ENCODE measurements at regions of chr11 and their contacts with region 1.

Region 1: GRCh38 chr11:131064373-131064991 is 148.2 kb upstream of the SNX19 start:
- DNase-seq: peak; percentile 76
- H3K4me3 ChIP-seq: no peak overlapping the region
- H3K27ac ChIP-seq: no peak overlapping the region
- H3K4me1 ChIP-seq: no peaks in the 10 kb centered on the region
- H3K27me3 ChIP-seq: peaks cover 80% of the 10 kb centered on the region
- CTCF ChIP-seq: peak; percentile 94

Region 2: GRCh38 chr11:129643031-129643721 is 1421.3 kb before region 1 on chr11:
- CTCF ChIA-PET with region 1: no interaction called
- POLR2A ChIA-PET with region 1: no interaction called
- intact Hi-C with region 1: no loop called
- DNase-seq: peak; percentile 51
- H3K4me3 ChIP-seq: no peak overlapping the region
- H3K27ac ChIP-seq: no peak overlapping the region
- H3K4me1 ChIP-seq: peaks cover 20% of the 10 kb centered on the region
- H3K27me3 ChIP-seq: no peaks in the 10 kb centered on the region
- CTCF ChIP-seq: no peak

Region 3: DNA sequence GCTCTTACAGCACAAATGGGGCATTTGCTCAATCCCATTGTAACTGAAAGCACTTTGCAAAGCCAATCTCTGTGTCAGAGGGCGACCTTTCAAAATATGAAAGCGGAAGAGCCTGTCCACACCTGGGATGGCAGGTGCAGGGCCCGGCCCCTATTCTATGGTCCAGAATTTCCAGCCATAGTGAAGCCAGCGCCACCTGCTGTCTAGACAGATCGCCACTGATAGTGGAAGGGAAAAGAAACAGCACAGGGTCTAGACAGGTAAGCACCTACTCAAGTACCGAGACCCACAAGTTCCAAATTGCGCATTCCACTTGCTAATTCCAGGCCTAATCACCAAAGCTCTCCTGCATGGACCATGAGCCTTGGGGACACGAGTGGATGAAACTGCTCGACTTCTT is 447.3 kb after region 1 on chr11:
- CTCF ChIA-PET with region 1: interaction called, 3 read pairs
- POLR2A ChIA-PET with region 1: no interaction called
- intact Hi-C with region 1: loop called (anchors 5 kb)
- DNase-seq: peak; percentile 15
- H3K4me3 ChIP-seq: no peak overlapping the region
- H3K27ac ChIP-seq: no peak overlapping the region
- H3K4me1 ChIP-seq: no peaks in the 10 kb centered on the region
- H3K27me3 ChIP-seq: peaks cover 35% of the 10 kb centered on the region
- CTCF ChIP-seq: peak; percentile 73